PC-3 (cell line): ENCODE measurements at regions of chr22 and their contacts with region 1.

Region 1: GRCh38 chr22:45413368-45414211 is at the starts of genes RIBC2 and SMC1B:
- DNase-seq: peak; percentile 81
- ATAC-seq: peak; percentile 89
- H3K4me3 ChIP-seq: peak within 1 kb of the TSS; percentile 71
- H3K27ac ChIP-seq: peak within 1 kb of the TSS; percentile 31; the same call in 1 of the 2 replicates
- H3K4me1 ChIP-seq: peaks cover 3% of the 10 kb centered on the region; the same call in 1 of the 2 replicates
- H3K27me3 ChIP-seq: no peaks in the 10 kb centered on the region
- CTCF ChIP-seq: no peak
- total RNA-seq, gene RIBC2: 2.7 and 4.5 TPM in 2 replicates
- total RNA-seq, gene SMC1B: 0.04 TPM in 1 of 2 replicates, not detected in the other

Region 2: GRCh38 chr22:45254789-45255278 is 158.8 kb before region 1 on chr22:
- CTCF ChIA-PET with region 1: interaction called, 10 read pairs
- POLR2A ChIA-PET with region 1: no interaction called
- intact Hi-C with region 1: no loop called
- DNase-seq: peak; percentile 40
- ATAC-seq: peak; percentile 72
- H3K4me3 ChIP-seq: no peak overlapping the region
- H3K27ac ChIP-seq: no peak overlapping the region
- H3K4me1 ChIP-seq: 0 out of 2 replicates have a peak, but pooled peaks cover 6% of the 10 kb centered on the region
- H3K27me3 ChIP-seq: no peaks in the 10 kb centered on the region
- CTCF ChIP-seq: no peak

Region 3: DNA sequence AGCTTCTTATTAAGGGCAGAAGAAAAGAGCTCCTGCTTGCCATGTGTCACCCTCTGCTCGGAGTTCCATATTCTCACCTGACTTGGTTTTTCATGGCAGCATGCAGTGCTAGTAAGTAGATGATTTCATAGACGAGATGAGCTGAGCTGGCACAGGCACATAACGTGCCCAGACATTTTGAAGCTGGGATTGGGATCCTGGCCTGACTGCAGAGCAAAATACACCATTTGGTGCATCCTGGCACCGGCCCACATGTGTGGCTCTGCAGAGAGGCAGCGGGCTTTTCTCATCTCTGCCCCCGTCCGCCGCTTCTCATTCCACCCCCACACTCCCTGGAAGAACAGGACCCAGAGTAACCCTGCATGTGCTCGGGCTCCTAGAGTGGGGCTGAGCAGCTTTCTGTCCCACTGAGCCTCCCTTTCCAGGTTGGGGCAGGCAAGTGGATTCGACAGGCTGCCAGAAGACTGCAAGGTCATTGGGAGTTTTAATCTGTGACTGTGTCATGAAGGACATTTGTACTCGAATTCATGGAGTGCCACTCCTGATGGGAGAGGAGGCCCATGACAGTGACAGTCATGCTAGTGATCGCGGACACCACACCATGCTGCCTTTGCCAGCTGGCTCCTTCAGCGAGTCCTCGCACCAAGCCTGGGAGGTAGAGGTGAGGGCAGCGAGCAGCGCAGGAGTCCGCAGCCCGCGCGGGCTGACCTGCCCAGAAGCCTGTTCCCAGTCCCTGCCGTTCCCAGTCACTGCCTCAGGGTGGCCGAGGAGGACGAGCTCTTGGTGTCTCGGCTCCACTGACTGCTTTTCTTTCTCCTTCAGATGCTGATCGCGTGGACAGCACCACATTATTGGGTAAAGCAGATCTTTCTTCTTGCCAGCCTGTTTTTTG is 78.8 kb before region 1 on chr22:
- CTCF ChIA-PET with region 1: interaction called, 17 read pairs
- POLR2A ChIA-PET with region 1: no interaction called
- intact Hi-C with region 1: no loop called
- DNase-seq: no peak
- ATAC-seq: peak; percentile 43
- H3K4me3 ChIP-seq: no peak overlapping the region
- H3K27ac ChIP-seq: no peak overlapping the region
- H3K4me1 ChIP-seq: no peaks in the 10 kb centered on the region
- H3K27me3 ChIP-seq: no peaks in the 10 kb centered on the region
- CTCF ChIP-seq: no peak